ENCODE measurements at regions of chr13 and their contacts with region 1.

Region 1: GRCh38 chr13:106513025-106513983 is 22.2 kb downstream of the EFNB2 start:
- DNase-seq: no peak
- H3K4me3 ChIP-seq: no peak overlapping the region
- H3K27me3 ChIP-seq: no peaks in the 10 kb centered on the region
- CTCF ChIP-seq: no peak

Region 2: DNA sequence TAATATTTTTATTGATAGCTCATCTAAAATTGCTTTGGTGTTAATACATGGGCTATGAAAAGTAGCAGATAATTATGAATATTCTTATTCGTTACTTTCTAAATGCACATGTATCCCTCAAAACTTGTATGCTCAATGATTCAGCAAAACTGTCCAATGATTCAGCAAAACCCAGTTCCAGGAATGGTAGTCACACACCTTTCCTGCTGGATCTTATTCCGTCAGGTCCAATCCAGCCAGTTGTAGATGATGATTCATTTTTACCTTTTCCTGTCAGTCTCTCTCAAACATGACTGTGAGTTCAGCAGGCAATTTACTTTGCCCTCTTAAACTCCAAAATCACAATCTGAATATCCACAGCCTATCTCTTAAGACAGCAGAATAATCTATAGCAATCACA is 1060.4 kb before region 1 on chr13:
- CTCF ChIA-PET with region 1: no interaction called
- POLR2A ChIA-PET with region 1: interaction called, 20 read pairs
- DNase-seq: no peak
- H3K4me3 ChIP-seq: no peak overlapping the region
- H3K27me3 ChIP-seq: no peaks in the 10 kb centered on the region
- CTCF ChIP-seq: no peak

Region 3: DNA sequence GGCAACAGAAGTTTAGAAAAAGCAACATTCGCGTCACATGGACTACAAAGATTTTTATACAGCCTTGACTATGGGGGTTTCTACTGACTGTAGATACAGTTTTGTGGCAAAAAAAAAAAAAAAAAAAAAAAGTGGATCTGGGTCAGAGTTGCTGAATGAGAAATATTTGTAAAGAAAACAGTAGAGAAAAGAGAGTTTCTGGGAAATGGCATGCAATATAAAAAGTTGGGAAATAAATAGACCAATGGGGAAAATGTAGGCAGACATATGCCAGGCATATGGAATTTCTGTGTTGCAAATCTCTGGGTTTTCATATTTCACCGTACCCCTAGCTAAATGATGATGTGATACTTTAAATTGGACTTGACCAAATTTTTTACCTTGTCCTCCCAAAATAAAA is 293.1 kb before region 1 on chr13:
- CTCF ChIA-PET with region 1: no interaction called
- POLR2A ChIA-PET with region 1: interaction called, 17 read pairs
- DNase-seq: no peak
- H3K4me3 ChIP-seq: no peak overlapping the region
- H3K27me3 ChIP-seq: no peaks in the 10 kb centered on the region
- CTCF ChIP-seq: no peak

Region 4: DNA sequence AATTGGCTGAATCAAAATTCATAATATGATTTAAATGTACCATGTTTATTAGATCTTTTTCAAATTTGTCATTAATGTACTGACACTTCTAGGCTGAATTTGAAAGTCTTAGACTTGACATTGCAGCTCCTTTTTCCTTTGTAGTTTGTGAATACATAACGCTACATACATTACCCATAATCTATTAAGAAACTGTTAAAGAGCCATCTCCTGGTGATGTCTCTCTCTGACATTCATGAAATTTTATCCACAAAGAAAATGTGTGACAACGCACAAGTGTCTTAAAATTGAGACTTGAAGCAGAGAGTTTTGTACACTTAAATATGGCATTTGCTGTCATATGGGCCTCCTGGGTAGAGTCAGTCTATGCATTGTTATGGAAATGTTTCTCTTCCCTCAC is 374.8 kb after region 1 on chr13:
- CTCF ChIA-PET with region 1: no interaction called
- POLR2A ChIA-PET with region 1: no interaction called
- DNase-seq: no peak
- H3K4me3 ChIP-seq: no peak overlapping the region
- H3K27me3 ChIP-seq: no peaks in the 10 kb centered on the region
- CTCF ChIP-seq: no peak

Measured in BJ (cell line).